ENCODE measurements at regions of chrX and their contacts with region 1.

Region 1: GRCh38 chrX:47482512-47483309 is at the start of gene ZNF41:
- DNase-seq: peak; percentile 86
- H3K4me3 ChIP-seq: peak within 1 kb of the TSS; percentile 62 to 71 (median 70)
- H3K27ac ChIP-seq: peak within 1 kb of the TSS; percentile 48
- H3K4me1 ChIP-seq: no peaks in the 10 kb centered on the region
- H3K27me3 ChIP-seq: no peaks in the 10 kb centered on the region
- CTCF ChIP-seq: no peak
- total RNA-seq, gene ZNF41: 6.0 to 9.5 TPM

Region 2: DNA sequence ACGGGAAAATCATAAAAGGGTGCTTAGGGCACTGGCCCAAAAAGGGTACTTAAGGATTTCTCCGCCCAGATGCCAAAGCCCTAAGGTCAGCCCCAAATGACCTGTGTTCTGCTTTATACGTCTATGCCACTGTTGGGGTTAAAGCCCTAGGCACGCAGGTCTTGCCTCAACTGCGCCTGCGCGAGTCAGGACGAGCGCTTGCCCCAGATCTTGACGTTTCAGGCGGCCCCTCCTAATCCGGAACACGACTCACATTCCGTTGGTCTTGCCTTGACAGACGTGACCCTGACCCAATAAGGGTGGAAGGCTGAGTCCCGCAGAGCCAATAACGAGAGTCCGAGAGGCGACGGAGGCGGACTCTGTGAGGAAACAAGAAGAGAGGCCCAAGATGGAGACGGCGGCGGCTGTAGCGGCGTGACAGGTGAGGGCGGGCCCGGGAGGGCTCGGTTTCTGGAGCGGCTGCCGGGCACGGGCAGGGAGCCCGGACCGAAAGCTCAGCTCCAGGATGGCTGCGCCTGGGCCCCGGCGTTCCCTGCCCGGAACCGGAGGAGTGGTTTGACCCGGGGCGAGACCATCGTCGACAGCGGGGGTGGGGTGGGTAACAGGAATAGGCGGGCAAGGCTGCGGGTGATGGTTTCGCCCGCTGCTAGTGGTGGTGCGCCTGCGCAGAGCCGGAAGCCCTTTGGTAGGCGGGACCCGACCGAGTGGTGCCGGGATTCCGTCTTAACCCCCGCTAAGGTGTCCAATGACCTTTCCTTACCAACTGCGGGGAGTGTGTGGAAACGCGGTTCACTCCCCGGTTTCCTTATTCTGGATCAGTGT is 78.3 kb after region 1 on chrX and contains the start of gene ARAF:
- CTCF ChIA-PET with region 1: no interaction called
- dilution Hi-C with region 1: no loop called
- in situ Hi-C with region 1: no loop called
- intact Hi-C with region 1: no loop called
- DNase-seq: peak; percentile 98
- H3K4me3 ChIP-seq: peak within 1 kb of the TSS; percentile 72 to 76 (median 72)
- H3K27ac ChIP-seq: peak within 1 kb of the TSS; percentile 54
- H3K4me1 ChIP-seq: peaks cover 8% of the 10 kb centered on the region
- H3K27me3 ChIP-seq: no peaks in the 10 kb centered on the region
- CTCF ChIP-seq: no peak
- total RNA-seq, gene ARAF: 15.8 to 48.6 TPM

Region 3: GRCh38 chrX:47836164-47837072 is 353.7 kb after region 1 on chrX and contains the start of gene ZNF81:
- CTCF ChIA-PET with region 1: no interaction called
- dilution Hi-C with region 1: no loop called
- in situ Hi-C with region 1: no loop called
- intact Hi-C with region 1: loop called (anchors 10 kb)
- DNase-seq: peak; percentile 94
- H3K4me3 ChIP-seq: peak within 1 kb of the TSS; percentile 55 to 59 (median 56)
- H3K27ac ChIP-seq: peak within 1 kb of the TSS; percentile 59
- H3K4me1 ChIP-seq: no peaks in the 10 kb centered on the region
- H3K27me3 ChIP-seq: no peaks in the 10 kb centered on the region
- CTCF ChIP-seq: no peak
- total RNA-seq, gene ZNF81: 6.1 to 7.8 TPM